ENCODE measurements at regions of chr9 and their contacts with region 1.

Region 1: DNA sequence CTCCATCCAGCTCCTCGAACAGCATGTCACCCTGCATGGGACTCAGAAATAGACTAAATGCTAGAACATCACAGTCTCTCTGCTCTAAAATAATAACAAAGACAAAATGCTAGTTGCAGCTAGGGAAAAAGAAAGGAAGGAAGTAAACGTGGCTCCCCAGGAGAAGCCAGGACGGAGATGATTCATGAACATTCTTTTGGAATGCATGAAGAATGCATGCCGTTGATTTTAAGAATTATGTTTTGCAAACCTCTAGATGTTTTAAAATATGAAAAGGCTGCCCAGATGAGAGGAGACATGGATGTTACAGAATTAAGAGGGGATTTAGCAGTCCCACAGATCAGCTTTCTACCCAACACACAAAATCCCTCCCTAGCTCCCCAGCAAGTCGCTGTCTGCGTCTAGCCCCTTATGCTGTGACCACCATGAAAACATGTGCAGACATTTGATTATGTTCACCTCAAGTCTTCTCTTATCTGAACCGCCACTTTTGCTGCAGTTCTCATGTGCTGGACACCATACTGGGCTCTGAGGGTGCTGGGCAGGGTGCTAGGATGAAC is 139.4 kb upstream of the LMX1B start:
- DNase-seq: peak; percentile 67
- H3K27ac ChIP-seq: no peak overlapping the region
- CTCF ChIP-seq: no peak

Region 2: DNA sequence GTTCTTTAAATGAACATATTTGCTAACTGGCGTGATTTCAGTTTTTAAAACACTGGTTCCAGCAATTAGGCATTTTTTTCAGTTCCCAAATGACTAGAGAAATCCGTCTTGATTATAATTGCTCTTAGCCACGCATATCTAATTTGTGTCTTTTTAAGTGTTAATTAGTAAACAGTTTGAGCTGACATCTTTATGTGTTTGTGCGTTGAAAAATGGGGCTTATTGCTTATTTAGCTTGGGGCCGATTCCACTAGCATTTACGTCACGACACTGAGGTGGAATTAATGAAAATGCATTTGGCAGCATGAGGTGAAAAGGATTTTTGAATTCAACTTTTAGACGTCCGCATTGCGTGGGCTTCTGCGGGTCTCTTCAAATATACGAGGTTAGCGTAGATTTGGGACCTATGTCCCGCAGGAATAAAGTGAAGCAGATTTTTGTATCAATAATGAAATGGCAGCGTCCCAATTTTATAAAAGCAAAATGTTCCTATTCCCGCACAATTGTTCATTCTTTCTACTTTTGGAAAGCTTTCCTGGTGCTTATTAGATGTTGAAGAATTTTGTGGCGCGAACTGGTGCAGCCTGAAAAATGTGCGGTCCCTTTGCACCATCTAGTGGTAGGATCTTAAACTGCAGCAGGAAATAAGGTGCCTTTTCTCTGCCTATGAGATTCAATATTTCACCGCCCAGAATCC is 16.7 kb after region 1 on chr9:
- CTCF ChIA-PET with region 1: interaction called, 10 read pairs
- POLR2A ChIA-PET with region 1: no interaction called
- DNase-seq: peak; percentile 70
- H3K27ac ChIP-seq: no peak overlapping the region
- CTCF ChIP-seq: peak; percentile 99